MCF 10A (cell line): ENCODE measurements at regions of chr2 and their contacts with region 1.

Region 1: GRCh38 chr2:107936433-107937359 is 49.6 kb upstream of the SLC5A7 start:
- DNase-seq: peak; percentile 40
- H3K4me3 Mint-ChIP-seq: no peak overlapping the region
- H3K27ac Mint-ChIP-seq: no peak overlapping the region
- H3K4me1 Mint-ChIP-seq: peaks cover 11% of the 10 kb centered on the region
- H3K27me3 Mint-ChIP-seq: peaks cover 16% of the 10 kb centered on the region
- CTCF ChIP-seq: peak; percentile 59

Region 2: GRCh38 chr2:107569496-107569895 is 367.2 kb before region 1 on chr2:
- CTCF ChIA-PET with region 1: interaction called, 4 read pairs
- POLR2A ChIA-PET with region 1: no interaction called
- intact Hi-C with region 1: loop called (anchors 5 kb)
- DNase-seq: no peak
- H3K4me3 Mint-ChIP-seq: no peak overlapping the region
- H3K27ac Mint-ChIP-seq: no peak overlapping the region
- H3K4me1 Mint-ChIP-seq: no peaks in the 10 kb centered on the region
- H3K27me3 Mint-ChIP-seq: no peaks in the 10 kb centered on the region
- CTCF ChIP-seq: no peak

Region 3: GRCh38 chr2:108169982-108170625 is 233.4 kb after region 1 on chr2:
- CTCF ChIA-PET with region 1: interaction called, 24 read pairs
- POLR2A ChIA-PET with region 1: interaction called, 3 read pairs
- intact Hi-C with region 1: no loop called
- DNase-seq: peak; percentile 42
- H3K4me3 Mint-ChIP-seq: no peak overlapping the region
- H3K27ac Mint-ChIP-seq: no peak overlapping the region
- H3K4me1 Mint-ChIP-seq: no peaks in the 10 kb centered on the region
- H3K27me3 Mint-ChIP-seq: peaks cover 49% of the 10 kb centered on the region
- CTCF ChIP-seq: peak; percentile 43

Region 4: GRCh38 chr2:108184419-108184818 is 247.7 kb after region 1 on chr2:
- CTCF ChIA-PET with region 1: interaction called, 51 read pairs
- POLR2A ChIA-PET with region 1: interaction called, 7 read pairs
- intact Hi-C with region 1: loop called (anchors 1 kb)
- DNase-seq: peak; percentile 47
- H3K4me3 Mint-ChIP-seq: no peak overlapping the region
- H3K27ac Mint-ChIP-seq: no peak overlapping the region
- H3K4me1 Mint-ChIP-seq: no peaks in the 10 kb centered on the region
- H3K27me3 Mint-ChIP-seq: peaks cover 23% of the 10 kb centered on the region
- CTCF ChIP-seq: peak; percentile 42

Region 5: DNA sequence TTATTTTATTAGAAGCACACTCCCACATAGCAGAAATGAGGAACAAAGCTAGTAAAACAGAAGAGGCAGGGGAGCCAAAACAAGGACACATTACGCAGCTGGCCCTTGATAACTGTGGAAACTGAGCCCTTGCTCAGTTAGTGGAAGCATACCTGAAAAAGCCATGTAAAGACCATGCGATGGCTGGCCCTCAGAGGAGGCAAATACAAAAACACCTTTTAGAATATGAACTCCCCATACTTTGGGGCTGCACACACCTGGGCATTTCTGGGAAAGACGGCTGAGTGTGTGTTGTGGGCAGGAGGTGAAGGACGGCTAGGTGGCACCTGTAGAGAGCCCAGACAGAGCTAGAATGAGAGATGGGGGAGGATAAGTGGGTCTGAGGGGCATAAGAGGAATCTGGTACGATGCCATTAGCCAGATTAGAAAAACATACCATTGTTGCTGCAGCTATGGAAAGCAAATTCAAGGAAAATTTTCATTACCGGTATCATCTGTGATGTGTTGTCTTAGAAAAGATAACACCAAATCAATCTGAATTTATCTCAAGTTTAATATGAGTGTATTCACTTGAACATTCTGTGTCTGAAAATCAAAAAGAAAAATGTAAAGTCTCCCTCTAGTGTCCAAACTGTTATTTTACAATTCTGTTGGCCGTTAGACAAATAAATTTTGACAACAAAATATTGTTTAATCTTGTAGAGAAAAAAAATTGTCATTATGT is 257.9 kb after region 1 on chr2:
- CTCF ChIA-PET with region 1: interaction called, 12 read pairs
- POLR2A ChIA-PET with region 1: no interaction called
- intact Hi-C with region 1: no loop called
- DNase-seq: no peak
- H3K4me3 Mint-ChIP-seq: no peak overlapping the region
- H3K27ac Mint-ChIP-seq: no peak overlapping the region
- H3K4me1 Mint-ChIP-seq: peaks cover 5% of the 10 kb centered on the region
- H3K27me3 Mint-ChIP-seq: no peaks in the 10 kb centered on the region
- CTCF ChIP-seq: no peak